B cell (primary cell): ENCODE measurements at regions of chr17 and their contacts with region 1.

Region 1: DNA sequence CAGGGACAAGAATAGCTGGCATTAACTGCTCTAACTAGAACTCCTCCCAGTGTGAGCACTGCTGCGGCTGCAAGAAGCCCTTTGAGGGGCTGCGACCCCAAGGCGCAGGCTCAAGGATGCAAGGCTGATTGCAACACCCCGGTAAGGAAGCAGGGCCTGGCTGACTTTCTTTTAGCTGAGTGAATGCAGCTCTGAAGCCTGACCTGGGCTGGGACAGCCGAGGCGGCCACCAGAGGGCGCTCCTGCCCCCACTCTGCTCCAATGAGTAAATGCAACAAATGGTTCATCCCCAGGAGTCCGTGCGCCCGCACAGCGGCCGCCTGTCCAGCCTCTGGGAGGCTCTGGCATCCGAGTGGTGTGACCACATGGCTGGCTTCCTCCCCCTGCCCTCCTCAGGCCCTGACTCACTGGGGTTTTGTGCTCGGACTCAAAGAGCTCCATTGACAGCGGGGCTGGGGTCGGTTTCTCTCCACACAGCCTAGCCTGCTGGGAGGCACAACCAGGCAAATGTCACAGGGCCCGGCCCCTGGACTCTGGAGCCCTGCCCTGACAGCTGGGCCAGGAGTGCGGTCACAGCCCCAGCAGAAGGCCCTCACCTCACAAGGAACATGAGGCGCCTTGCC is at the start of gene SMIM5:
- DNase-seq: peak; percentile 86
- ATAC-seq: peak; percentile 85
- H3K4me3 ChIP-seq: no peak within 1 kb of the TSS
- H3K4me3 Mint-ChIP-seq: no peak within 1 kb of the TSS
- H3K27ac ChIP-seq: no peak within 1 kb of the TSS
- H3K27ac Mint-ChIP-seq: no peak within 1 kb of the TSS
- H3K4me1 ChIP-seq: peaks cover 9 to 18% of the 10 kb centered on the region in 2 donors
- H3K4me1 Mint-ChIP-seq: peaks cover 13% of the 10 kb centered on the region
- H3K27me3 ChIP-seq: no peaks in the 10 kb centered on the region
- H3K27me3 Mint-ChIP-seq: no peaks in the 10 kb centered on the region
- CTCF ChIP-seq: peak; percentile 95
- total RNA-seq, gene SMIM5: 0.61 and 0.62 TPM in 2 replicates

Region 2: DNA sequence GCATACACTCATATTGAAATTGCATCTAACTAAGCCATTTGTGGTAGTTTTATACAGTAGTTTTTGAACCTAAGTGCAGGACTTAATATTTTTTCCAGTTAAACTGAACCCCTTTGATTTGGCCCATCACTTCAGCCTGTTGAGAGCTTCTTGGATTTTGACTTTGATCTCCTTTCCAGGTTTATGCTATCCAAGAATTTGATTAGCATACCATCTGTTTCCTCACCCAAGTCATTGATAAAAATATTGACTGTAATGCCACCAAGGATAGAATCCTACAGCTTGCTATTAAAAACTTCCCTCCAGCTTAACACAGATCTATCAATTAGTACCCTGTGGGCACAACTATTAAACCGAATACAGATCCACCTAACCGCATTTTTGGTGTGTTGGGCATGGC is 169.4 kb before region 1 on chr17:
- CTCF ChIA-PET with region 1: no interaction called
- POLR2A ChIA-PET with region 1: no interaction called
- intact Hi-C with region 1: no loop called
- DNase-seq: no peak
- ATAC-seq: no peak
- H3K4me3 ChIP-seq: no peak overlapping the region
- H3K4me3 Mint-ChIP-seq: no peak overlapping the region
- H3K27ac ChIP-seq: no peak overlapping the region
- H3K27ac Mint-ChIP-seq: no peak overlapping the region
- H3K4me1 ChIP-seq: peaks cover 0 to 4% of the 10 kb centered on the region in 2 donors
- H3K4me1 Mint-ChIP-seq: peaks cover 16% of the 10 kb centered on the region
- H3K27me3 ChIP-seq: no peaks in the 10 kb centered on the region
- H3K27me3 Mint-ChIP-seq: no peaks in the 10 kb centered on the region
- CTCF ChIP-seq: no peak

Region 3: GRCh38 chr17:75524953-75525719 is 107.8 kb before region 1 on chr17 and contains the start of gene LLGL2:
- CTCF ChIA-PET with region 1: no interaction called
- POLR2A ChIA-PET with region 1: no interaction called
- intact Hi-C with region 1: no loop called
- DNase-seq: peak; percentile 92
- ATAC-seq: peak; percentile 92
- H3K4me3 ChIP-seq: peak within 1 kb of the TSS; percentile 35 to 80 (median 74)
- H3K4me3 Mint-ChIP-seq: peak within 1 kb of the TSS; percentile 89
- H3K27ac ChIP-seq: peak within 1 kb of the TSS in 1 of 2 donors; percentile 24
- H3K27ac Mint-ChIP-seq: no peak within 1 kb of the TSS
- H3K4me1 ChIP-seq: peaks cover 15 to 18% of the 10 kb centered on the region in 2 donors
- H3K4me1 Mint-ChIP-seq: peaks cover 14% of the 10 kb centered on the region
- H3K27me3 ChIP-seq: peaks cover 0 to 7% (median 0%) of the 10 kb centered on the region in 4 experiments
- H3K27me3 Mint-ChIP-seq: no peaks in the 10 kb centered on the region
- CTCF ChIP-seq: peak; percentile 47
- total RNA-seq, gene LLGL2: 39.7 and 40.6 TPM in 2 replicates

Region 4: DNA sequence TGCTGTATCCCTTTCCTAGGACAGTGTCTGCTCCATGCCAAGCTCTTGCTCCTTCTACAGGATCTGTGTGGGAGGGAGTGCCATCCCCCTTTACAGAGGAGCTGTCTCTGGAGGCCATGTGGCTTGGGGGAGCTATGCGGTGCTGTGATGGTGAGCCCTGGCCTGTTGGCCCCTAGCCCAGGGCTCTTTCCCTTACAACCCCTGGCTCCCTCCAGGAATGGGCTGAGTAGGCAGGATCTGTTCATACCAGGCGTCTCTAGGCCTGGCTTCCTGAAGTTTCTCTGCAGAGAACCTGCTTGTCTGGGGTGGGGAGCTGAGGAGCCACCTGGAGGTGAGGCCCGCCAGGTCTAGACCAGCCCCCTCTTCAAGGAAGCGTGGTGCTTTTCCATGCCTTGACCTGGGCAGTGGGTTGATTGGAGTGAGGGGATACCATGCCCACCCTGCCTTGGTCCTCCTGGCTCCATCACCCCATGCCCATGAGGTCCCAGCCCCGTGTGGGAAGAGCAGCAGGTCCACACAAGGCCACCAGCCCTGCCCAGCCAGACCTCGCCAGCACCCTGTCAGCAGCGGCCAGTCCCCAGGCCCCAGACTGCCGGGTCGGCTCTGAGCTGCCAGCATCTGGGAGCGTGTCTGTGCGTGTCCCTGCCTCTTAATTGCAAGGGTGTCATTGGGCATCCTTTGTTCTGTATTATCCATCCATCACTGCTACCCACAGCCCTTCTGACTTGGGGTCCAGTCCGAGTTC is 92.8 kb before region 1 on chr17:
- CTCF ChIA-PET with region 1: no interaction called
- POLR2A ChIA-PET with region 1: no interaction called
- intact Hi-C with region 1: no loop called
- DNase-seq: no peak
- ATAC-seq: no peak
- H3K4me3 ChIP-seq: no peak overlapping the region
- H3K4me3 Mint-ChIP-seq: no peak overlapping the region
- H3K27ac ChIP-seq: no peak overlapping the region
- H3K27ac Mint-ChIP-seq: no peak overlapping the region
- H3K4me1 ChIP-seq: peaks cover under 1 to 9% of the 10 kb centered on the region in 2 donors
- H3K4me1 Mint-ChIP-seq: peaks cover under 1% of the 10 kb centered on the region
- H3K27me3 ChIP-seq: no peaks in the 10 kb centered on the region
- H3K27me3 Mint-ChIP-seq: no peaks in the 10 kb centered on the region
- CTCF ChIP-seq: no peak

Region 5: GRCh38 chr17:75601057-75602051 is 31.6 kb before region 1 on chr17:
- CTCF ChIA-PET with region 1: interaction called, 13 read pairs
- POLR2A ChIA-PET with region 1: no interaction called
- intact Hi-C with region 1: no loop called
- DNase-seq: peak; percentile 68
- ATAC-seq: peak; percentile 77
- H3K4me3 ChIP-seq: no peak overlapping the region
- H3K4me3 Mint-ChIP-seq: no peak overlapping the region
- H3K27ac ChIP-seq: no peak overlapping the region
- H3K27ac Mint-ChIP-seq: no peak overlapping the region
- H3K4me1 ChIP-seq: no peaks in the 10 kb centered on the region
- H3K4me1 Mint-ChIP-seq: no peaks in the 10 kb centered on the region
- H3K27me3 ChIP-seq: no peaks in the 10 kb centered on the region
- H3K27me3 Mint-ChIP-seq: no peaks in the 10 kb centered on the region
- CTCF ChIP-seq: peak; percentile 76

Region 6: GRCh38 chr17:75652915-75653549 is 20.1 kb after region 1 on chr17:
- CTCF ChIA-PET with region 1: interaction called, 62 read pairs
- POLR2A ChIA-PET with region 1: no interaction called
- intact Hi-C with region 1: loop called (anchors 2 kb)
- DNase-seq: peak; percentile 59
- ATAC-seq: peak; percentile 81
- H3K4me3 ChIP-seq: no peak overlapping the region
- H3K4me3 Mint-ChIP-seq: no peak overlapping the region
- H3K27ac ChIP-seq: no peak overlapping the region
- H3K27ac Mint-ChIP-seq: peak overlapping the region; percentile 20
- H3K4me1 ChIP-seq: peaks cover 6 to 8% of the 10 kb centered on the region in 2 donors
- H3K4me1 Mint-ChIP-seq: peaks cover 7% of the 10 kb centered on the region
- H3K27me3 ChIP-seq: no peaks in the 10 kb centered on the region
- H3K27me3 Mint-ChIP-seq: no peaks in the 10 kb centered on the region
- CTCF ChIP-seq: peak; percentile 73

Region 7: DNA sequence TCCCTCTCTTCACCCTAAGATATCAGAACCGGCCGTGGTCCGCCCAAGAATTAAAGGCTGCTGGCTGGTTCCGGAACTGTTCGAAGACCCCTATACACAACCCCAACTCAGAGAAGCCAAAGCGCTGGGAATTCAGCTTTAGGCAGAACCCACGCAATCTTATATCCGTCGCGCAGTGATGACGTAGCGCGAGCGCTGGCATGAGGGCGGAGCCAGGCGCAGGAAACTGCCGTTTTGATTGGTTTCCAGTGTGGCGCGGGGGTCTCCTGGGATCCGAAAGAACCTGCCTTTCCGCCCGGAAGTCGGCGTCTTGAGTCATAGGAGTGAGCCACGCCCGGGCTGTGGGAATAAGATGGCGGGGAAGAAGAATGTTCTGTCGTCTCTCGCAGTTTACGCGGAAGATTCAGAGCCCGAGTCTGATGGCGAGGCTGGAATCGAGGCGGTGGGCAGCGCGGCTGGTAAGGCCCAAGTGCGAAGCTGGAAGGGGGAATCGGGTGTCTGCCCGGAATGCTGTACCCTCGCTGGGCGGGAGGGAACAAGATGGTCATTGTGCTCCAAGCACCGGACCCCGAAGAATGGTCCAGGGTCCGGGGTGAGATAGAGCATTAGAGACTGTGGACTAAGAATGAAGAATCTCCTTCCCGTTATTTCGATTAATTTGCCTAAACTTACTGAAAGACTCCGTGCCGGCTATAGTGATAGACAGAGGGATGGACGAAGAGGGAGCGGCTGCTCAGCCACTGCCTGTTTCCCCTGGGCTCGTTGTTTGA is 34.2 kb after region 1 on chr17 and contains the starts of genes RECQL5 and SAP30BP:
- CTCF ChIA-PET with region 1: interaction called, 44 read pairs
- POLR2A ChIA-PET with region 1: interaction called, 3 read pairs
- intact Hi-C with region 1: no loop called
- DNase-seq: peak; percentile 99
- ATAC-seq: peak; percentile 85
- H3K4me3 ChIP-seq: peak within 1 kb of the TSS; percentile 84 to 99 (median 98)
- H3K4me3 Mint-ChIP-seq: peak within 1 kb of the TSS; percentile 50
- H3K27ac ChIP-seq: peak within 1 kb of the TSS; percentile 84 to 89
- H3K27ac Mint-ChIP-seq: peak within 1 kb of the TSS; percentile 78
- H3K4me1 ChIP-seq: peaks cover 40 to 46% of the 10 kb centered on the region in 2 donors
- H3K4me1 Mint-ChIP-seq: peaks cover 34% of the 10 kb centered on the region
- H3K27me3 ChIP-seq: no peaks in the 10 kb centered on the region
- H3K27me3 Mint-ChIP-seq: no peaks in the 10 kb centered on the region
- CTCF ChIP-seq: no peak
- total RNA-seq, gene RECQL5: 56.6 and 58.5 TPM in 2 replicates
- total RNA-seq, gene SAP30BP: 148 and 174 TPM in 2 replicates

Region 8: GRCh38 chr17:75679706-75680442 is 46.9 kb after region 1 on chr17:
- CTCF ChIA-PET with region 1: interaction called, 44 read pairs
- POLR2A ChIA-PET with region 1: no interaction called
- intact Hi-C with region 1: loop called (anchors 1 kb)
- DNase-seq: no peak
- ATAC-seq: no peak
- H3K4me3 ChIP-seq: no peak overlapping the region
- H3K4me3 Mint-ChIP-seq: no peak overlapping the region
- H3K27ac ChIP-seq: no peak overlapping the region
- H3K27ac Mint-ChIP-seq: no peak overlapping the region
- H3K4me1 ChIP-seq: peaks cover 0 to 2% of the 10 kb centered on the region in 2 donors
- H3K4me1 Mint-ChIP-seq: peaks cover 18% of the 10 kb centered on the region
- H3K27me3 ChIP-seq: no peaks in the 10 kb centered on the region
- H3K27me3 Mint-ChIP-seq: no peaks in the 10 kb centered on the region
- CTCF ChIP-seq: no peak

Region 9: GRCh38 chr17:75712446-75712845 is 79.5 kb after region 1 on chr17:
- CTCF ChIA-PET with region 1: interaction called, 13 read pairs
- POLR2A ChIA-PET with region 1: no interaction called
- intact Hi-C with region 1: no loop called
- DNase-seq: no peak
- ATAC-seq: no peak
- H3K4me3 ChIP-seq: no peak overlapping the region
- H3K4me3 Mint-ChIP-seq: no peak overlapping the region
- H3K27ac ChIP-seq: no peak overlapping the region
- H3K27ac Mint-ChIP-seq: no peak overlapping the region
- H3K4me1 ChIP-seq: no peaks in the 10 kb centered on the region
- H3K4me1 Mint-ChIP-seq: peaks cover 2% of the 10 kb centered on the region
- H3K27me3 ChIP-seq: no peaks in the 10 kb centered on the region
- H3K27me3 Mint-ChIP-seq: peaks cover 3% of the 10 kb centered on the region
- CTCF ChIP-seq: no peak

Region 10: DNA sequence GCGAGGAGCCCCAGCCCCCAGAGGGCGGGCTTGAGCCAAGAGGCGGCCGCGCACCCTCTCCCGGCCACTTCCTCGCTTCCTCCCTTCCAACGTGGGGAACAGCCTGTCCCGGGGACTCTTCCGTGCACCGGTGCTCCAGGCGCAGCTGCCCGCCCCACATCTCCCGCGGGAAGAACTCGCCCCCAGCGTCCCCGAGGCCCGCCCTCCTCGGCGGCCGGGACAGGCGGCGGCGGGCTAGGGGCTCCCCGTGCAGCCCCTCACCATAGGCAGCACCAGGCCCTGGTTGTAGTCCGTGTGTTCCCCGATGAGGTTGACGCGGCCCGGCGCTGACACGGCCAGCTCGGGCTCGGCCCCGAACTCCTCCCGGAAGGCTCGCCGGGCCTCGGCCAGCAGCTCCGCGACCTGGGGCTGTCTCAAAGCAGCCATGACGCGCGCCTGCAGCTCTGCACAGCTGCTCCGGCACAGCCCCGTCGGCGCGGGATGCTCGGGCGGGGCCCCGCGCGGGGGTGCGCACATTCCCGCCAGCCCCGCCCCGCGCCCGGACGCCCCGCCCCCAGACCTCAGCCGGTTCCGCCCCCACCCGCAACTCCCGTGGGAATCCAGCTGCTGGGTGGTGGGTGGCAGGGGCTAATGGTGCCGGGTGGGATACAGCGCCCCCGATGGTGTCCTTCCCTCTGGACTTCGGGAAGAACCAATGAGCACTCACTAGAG is 131.9 kb after region 1 on chr17 and contains the start of gene GALK1:
- CTCF ChIA-PET with region 1: interaction called, 13 read pairs
- POLR2A ChIA-PET with region 1: no interaction called
- intact Hi-C with region 1: no loop called
- DNase-seq: peak; percentile 88
- ATAC-seq: peak; percentile 91
- H3K4me3 ChIP-seq: peak within 1 kb of the TSS; percentile 38 to 88 (median 83)
- H3K4me3 Mint-ChIP-seq: peak within 1 kb of the TSS; percentile 85
- H3K27ac ChIP-seq: peak within 1 kb of the TSS; percentile 15 to 72
- H3K27ac Mint-ChIP-seq: peak within 1 kb of the TSS; percentile 83
- H3K4me1 ChIP-seq: peaks cover 14 to 23% of the 10 kb centered on the region in 2 donors
- H3K4me1 Mint-ChIP-seq: peaks cover 18% of the 10 kb centered on the region
- H3K27me3 ChIP-seq: no peaks in the 10 kb centered on the region
- H3K27me3 Mint-ChIP-seq: no peaks in the 10 kb centered on the region
- CTCF ChIP-seq: peak; percentile 78
- total RNA-seq, gene GALK1: 29.8 and 33.9 TPM in 2 replicates